Activated CD4-positive, alpha-beta T cell treated with anti-CD3 and anti-CD28 coated beads, Interleukin-2, amount 10 ng/mL, durations not matched to agents 24 days and 14 days (primary cell): ENCODE measurements at regions of chr4 and their contacts with region 1.

Region 1: GRCh38 chr4:122922877-122923511 is 597 bp upstream of the NUDT6 start:
- DNase-seq: peak; percentile 97
- H3K4me3 Mint-ChIP-seq: no peak overlapping the region
- H3K27ac Mint-ChIP-seq: peak overlapping the region; percentile 96
- H3K4me1 Mint-ChIP-seq: peaks cover 24% of the 10 kb centered on the region
- H3K27me3 Mint-ChIP-seq: no peaks in the 10 kb centered on the region

Region 2: DNA sequence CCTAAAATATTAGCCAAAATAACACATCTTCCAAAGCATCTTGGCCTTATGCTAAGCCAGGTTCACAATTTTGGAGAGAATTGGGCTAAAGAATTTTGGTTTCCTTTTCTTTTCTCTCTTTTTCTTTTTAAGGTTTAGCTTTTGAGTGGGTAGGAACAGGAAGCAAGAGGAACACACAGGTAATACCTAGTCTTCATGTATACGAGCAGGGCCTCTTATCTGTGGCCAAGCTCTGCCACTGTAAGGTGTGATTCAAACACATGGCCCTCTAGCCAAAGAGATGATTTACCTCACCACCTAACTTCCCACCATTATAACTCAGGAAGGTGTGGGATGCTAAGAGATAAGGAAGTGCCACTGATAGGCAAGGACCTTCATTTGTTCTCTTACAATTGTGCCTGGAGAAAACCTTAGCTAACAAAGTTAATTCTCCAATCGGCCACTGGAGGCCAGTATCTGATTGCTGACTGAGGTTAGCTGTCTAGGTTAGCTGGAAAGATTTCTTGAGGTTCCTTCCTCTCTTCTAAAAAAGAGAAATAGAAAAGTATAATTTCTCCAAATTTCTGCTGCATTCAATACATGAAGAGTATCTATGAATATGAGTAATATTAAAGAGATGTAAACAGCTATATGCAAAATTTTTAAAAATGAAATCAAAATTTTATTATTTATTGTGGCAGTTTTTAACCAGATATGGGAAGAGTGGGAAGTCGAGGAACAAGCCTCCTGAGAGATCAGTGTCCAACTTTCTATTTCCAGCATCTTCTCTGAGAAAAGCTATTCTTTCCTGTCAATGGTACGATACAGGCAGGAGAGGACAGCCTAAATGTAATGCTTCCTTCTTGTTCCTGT is 1022.6 kb before region 1 on chr4:
- intact Hi-C with region 1: loop called (anchors 10 kb)
- DNase-seq: peak; percentile 86
- H3K4me3 Mint-ChIP-seq: no peak overlapping the region
- H3K27ac Mint-ChIP-seq: no peak overlapping the region
- H3K4me1 Mint-ChIP-seq: peaks cover 4% of the 10 kb centered on the region
- H3K27me3 Mint-ChIP-seq: peaks cover 3% of the 10 kb centered on the region

Region 3: DNA sequence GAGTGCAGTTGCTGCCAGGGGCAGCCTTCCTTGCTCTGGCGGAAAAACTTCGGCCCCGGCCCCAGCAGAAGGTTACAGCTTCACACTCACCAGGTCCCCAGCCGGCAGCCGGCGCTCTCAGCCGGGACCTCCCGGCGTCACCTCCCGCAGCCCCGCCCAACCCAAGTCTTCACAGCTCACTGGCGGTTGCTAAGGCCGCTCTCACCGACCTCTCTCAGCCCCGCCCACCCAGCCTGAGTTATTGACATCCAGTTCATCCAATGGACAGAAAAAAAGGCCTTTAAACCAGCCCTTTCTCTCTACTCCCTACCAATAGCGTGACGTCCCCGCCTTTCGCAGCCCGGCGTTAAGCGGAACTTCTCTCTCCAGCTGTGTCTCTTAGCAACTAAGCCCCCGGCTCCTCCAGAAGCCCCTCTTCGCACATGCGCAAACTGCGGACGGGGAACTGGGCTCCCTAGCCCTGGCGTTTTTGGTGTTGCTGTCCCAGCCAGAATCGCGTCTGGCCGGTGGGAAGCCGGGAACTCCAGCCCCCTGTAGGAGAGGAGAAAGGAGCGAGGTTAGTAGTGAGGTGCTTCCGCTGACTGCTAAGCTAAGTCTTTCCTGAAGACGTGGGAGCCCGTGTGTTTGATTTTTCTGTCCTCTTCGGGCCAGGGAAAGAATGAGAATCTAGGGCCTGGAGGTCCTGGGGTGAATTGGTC is 190.5 kb before region 1 on chr4 and contains the start of gene BBS12:
- intact Hi-C with region 1: loop called (anchors 1 kb)
- DNase-seq: peak; percentile 100
- H3K4me3 Mint-ChIP-seq: peak within 1 kb of the TSS; percentile 94
- H3K27ac Mint-ChIP-seq: peak within 1 kb of the TSS; percentile 96
- H3K4me1 Mint-ChIP-seq: peaks cover 25% of the 10 kb centered on the region
- H3K27me3 Mint-ChIP-seq: no peaks in the 10 kb centered on the region
- total RNA-seq, gene BBS12: 3.8 and 4.7 TPM in 2 replicates

Region 4: GRCh38 chr4:122758033-122758432 is 165.0 kb before region 1 on chr4:
- intact Hi-C with region 1: loop called (anchors 1 kb)
- DNase-seq: no peak
- H3K4me3 Mint-ChIP-seq: no peak overlapping the region
- H3K27ac Mint-ChIP-seq: no peak overlapping the region
- H3K4me1 Mint-ChIP-seq: peaks cover 34% of the 10 kb centered on the region
- H3K27me3 Mint-ChIP-seq: peaks cover 22% of the 10 kb centered on the region

Region 5: DNA sequence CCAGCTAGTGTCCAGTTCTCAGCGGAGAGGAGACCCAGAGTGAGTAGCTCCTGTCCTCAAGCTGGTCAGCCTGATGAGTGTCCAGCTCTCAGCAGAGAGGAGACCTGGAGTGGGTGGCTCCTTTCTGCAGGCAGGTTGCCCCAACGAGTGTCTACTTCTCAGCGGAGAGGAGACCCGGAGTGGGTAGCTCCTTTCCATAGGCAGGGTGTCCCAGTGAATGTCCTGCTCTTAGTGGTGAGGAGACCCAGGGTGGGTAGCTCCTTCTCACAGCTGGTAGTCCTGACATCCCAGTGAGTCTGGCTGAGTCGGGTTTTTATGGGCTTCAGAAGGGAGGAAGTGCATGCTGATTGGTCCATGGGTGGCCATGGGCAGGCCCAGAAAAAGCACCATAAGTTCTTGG is 55.1 kb after region 1 on chr4:
- intact Hi-C with region 1: no loop called
- DNase-seq: no peak
- H3K4me3 Mint-ChIP-seq: no peak overlapping the region
- H3K27ac Mint-ChIP-seq: no peak overlapping the region
- H3K4me1 Mint-ChIP-seq: no peaks in the 10 kb centered on the region
- H3K27me3 Mint-ChIP-seq: no peaks in the 10 kb centered on the region

Region 6: DNA sequence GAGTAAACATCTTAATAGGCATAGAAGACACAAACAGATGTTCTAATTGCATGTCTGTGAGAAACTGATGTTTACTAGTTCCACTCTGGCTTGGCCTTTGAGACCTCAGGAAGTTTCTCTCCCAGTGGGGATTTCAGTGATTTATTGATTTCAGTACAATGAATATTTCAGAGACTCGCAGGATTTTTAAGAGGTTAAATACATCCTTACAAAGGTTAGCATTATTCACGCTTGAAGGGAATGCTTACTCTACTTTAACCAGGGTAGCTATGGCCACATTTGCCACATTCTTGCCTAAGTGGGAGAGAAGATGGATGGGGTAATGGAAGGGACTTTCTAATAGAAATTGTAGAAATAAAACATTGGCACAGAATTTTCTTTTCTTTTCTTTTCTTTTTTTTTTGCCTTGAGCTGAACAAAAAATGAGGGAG is 953.7 kb after region 1 on chr4:
- intact Hi-C with region 1: no loop called
- DNase-seq: no peak
- H3K4me3 Mint-ChIP-seq: no peak overlapping the region
- H3K27ac Mint-ChIP-seq: no peak overlapping the region
- H3K4me1 Mint-ChIP-seq: no peaks in the 10 kb centered on the region
- H3K27me3 Mint-ChIP-seq: no peaks in the 10 kb centered on the region